Aorta (tissue), 5 donors: ENCODE measurements at regions of chr12 and their contacts with region 1.

Region 1: GRCh38 chr12:25829192-25829591 is 129.3 kb upstream of the RASSF8 start:
- DNase-seq: no peak
- ATAC-seq: no peak
- H3K4me3 ChIP-seq: no peak overlapping the region
- H3K27ac ChIP-seq: no peak overlapping the region
- H3K4me1 ChIP-seq: no peaks in the 10 kb centered on the region
- H3K27me3 ChIP-seq: no peaks in the 10 kb centered on the region

Region 2: GRCh38 chr12:25839455-25839854 is 10.3 kb after region 1 on chr12:
- intact Hi-C with region 1: loop called in 1 of 2 experiments (anchors 1 kb)
- DNase-seq: no peak
- ATAC-seq: no peak
- H3K4me3 ChIP-seq: no peak overlapping the region
- H3K27ac ChIP-seq: no peak overlapping the region
- H3K4me1 ChIP-seq: no peaks in the 10 kb centered on the region
- H3K27me3 ChIP-seq: no peaks in the 10 kb centered on the region

Region 3: GRCh38 chr12:26017484-26018206 is 188.5 kb after region 1 on chr12:
- intact Hi-C with region 1: loop called in 1 of 2 experiments (anchors 10 kb)
- DNase-seq: no peak
- ATAC-seq: peak; percentile 57
- H3K4me3 ChIP-seq: no peak overlapping the region
- H3K27ac ChIP-seq: no peak overlapping the region
- H3K4me1 ChIP-seq: no peaks in the 10 kb centered on the region
- H3K27me3 ChIP-seq: no peaks in the 10 kb centered on the region